SK-MEL-5 (cell line): ENCODE measurements at regions of chr17 and their contacts with region 1.

Region 1: GRCh38 chr17:81512560-81513371 is at the start of gene ACTG1:
- DNase-seq: peak; percentile 98
- total RNA-seq, gene ACTG1: 6,652 and 7,362 TPM in 2 replicates

Region 2: DNA sequence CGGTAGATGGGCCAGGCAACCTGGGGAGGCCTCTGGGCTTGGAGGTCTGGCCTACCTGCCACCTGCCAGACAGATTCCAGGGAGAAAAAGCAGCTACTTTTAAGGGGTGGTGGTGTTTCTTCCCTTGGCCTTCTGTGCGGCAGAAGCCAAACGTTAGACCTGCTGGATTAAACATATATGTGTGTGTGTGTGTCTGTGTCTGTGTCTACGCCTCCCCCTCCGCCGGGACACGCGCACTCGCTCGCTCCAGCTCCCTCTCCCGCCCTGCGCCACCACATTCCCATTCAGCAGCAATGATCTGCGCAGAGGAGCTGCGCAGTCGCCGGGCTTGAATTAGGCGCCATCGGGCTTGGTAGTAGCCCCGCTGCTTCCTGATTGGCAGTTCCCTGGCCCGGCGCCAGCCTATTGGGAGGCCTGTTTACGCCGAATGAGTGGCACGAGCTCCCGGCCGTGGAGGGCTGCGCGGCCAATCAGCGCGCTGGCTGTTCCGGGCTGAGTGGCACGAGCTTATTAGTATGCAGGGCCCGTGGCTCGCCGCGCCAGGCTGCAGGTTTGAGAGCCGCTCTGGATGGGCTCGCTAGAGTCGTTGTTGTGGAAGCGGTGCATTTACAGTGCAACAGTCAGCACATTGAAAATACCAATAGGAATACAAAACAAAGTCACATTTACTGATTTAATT is 117.7 kb before region 1 on chr17 and contains the start of gene BAHCC1:
- in situ Hi-C with region 1: loop called (anchors 10 kb)
- DNase-seq: peak; percentile 100
- total RNA-seq, gene BAHCC1: 15.4 and 19.1 TPM in 2 replicates